ENCODE measurements at regions of chrX and their contacts with region 1.

Region 1: DNA sequence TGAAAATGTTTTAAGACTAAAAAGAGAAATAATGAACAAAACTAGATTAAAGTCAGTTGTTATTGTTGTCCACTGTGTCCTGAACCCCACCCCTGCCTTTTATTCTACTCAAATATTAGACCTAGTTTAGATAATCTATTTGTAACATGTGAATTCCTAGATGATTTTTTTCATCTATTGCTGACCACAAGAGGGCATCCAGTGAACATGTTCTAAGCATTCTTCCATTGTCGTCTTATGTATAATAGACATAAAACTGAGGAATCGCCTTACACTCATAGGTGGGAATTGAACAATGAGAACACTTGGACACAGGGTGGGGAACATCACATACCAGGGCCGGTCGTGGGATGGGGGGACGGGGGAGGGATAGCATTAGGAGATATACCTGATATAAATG is 36.4 kb upstream of the HPRT1 start:
- DNase-seq: peak; percentile 36
- H3K4me3 ChIP-seq: no peak overlapping the region
- H3K27ac ChIP-seq: no peak overlapping the region
- H3K4me1 ChIP-seq: no peaks in the 10 kb centered on the region
- H3K27me3 ChIP-seq: no peaks in the 10 kb centered on the region
- CTCF ChIP-seq: peak; percentile 60

Region 2: GRCh38 chrX:134512566-134512965 is 89.0 kb after region 1 on chrX:
- CTCF ChIA-PET with region 1: no interaction called
- POLR2A ChIA-PET with region 1: no interaction called
- intact Hi-C with region 1: no loop called
- DNase-seq: peak; percentile 18
- H3K4me3 ChIP-seq: no peak overlapping the region
- H3K27ac ChIP-seq: no peak overlapping the region
- H3K4me1 ChIP-seq: no peaks in the 10 kb centered on the region
- H3K27me3 ChIP-seq: no peaks in the 10 kb centered on the region
- CTCF ChIP-seq: no peak

Region 3: DNA sequence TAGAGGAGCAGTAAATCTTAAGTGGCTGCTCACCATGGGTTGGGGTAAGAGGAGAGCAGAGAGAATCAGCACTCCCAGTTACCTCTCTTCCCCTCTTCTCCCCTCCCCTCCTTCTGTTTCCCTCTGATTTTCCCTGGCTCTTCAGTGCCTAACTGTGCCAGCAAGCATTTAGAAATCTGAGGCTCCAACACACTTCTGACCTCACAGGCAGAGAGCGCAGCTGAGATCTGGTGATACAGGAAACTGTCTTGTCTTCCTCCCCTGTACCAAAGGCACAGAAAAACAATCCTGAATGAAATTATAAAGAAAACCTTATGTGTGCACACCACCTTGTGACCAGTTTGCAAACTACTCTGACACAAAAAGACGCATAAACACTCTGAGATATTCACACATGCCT is 484.7 kb after region 1 on chrX:
- CTCF ChIA-PET with region 1: no interaction called
- POLR2A ChIA-PET with region 1: no interaction called
- intact Hi-C with region 1: loop called (anchors 5 kb)
- DNase-seq: peak; percentile 42
- H3K4me3 ChIP-seq: no peak overlapping the region
- H3K27ac ChIP-seq: no peak overlapping the region
- H3K4me1 ChIP-seq: no peaks in the 10 kb centered on the region
- H3K27me3 ChIP-seq: no peaks in the 10 kb centered on the region
- CTCF ChIP-seq: peak; percentile 40

Measured in A673 (cell line).